Activated T-helper 1 cell treated with anti-CD3 and anti-CD28 coated beads, Interleukin-12 subunit alpha, Interleukin-12 subunit beta, Interleukin-2, Interleukin-4 antibody, amounts not matched to agents 30 ng/mL and 10 ng/mL and 1 ng/mL, durations not matched to agents 14 hours and 24 hours and 36 hours (primary cell): ENCODE measurements at regions of chr16 and their contacts with region 1.

Region 1: GRCh38 chr16:69396187-69397061 is 10.6 kb upstream of the TERF2 start:
- DNase-seq: peak; percentile 60
- H3K4me3 Mint-ChIP-seq: no peak overlapping the region
- H3K27ac Mint-ChIP-seq: peak overlapping the region; percentile 18
- H3K4me1 Mint-ChIP-seq: peaks cover 17% of the 10 kb centered on the region
- H3K27me3 Mint-ChIP-seq: peaks cover 5% of the 10 kb centered on the region

Region 2: GRCh38 chr16:69378760-69379159 is 17.7 kb before region 1 on chr16:
- intact Hi-C with region 1: no loop called
- DNase-seq: no peak
- H3K4me3 Mint-ChIP-seq: no peak overlapping the region
- H3K27ac Mint-ChIP-seq: no peak overlapping the region
- H3K4me1 Mint-ChIP-seq: peaks cover 24% of the 10 kb centered on the region
- H3K27me3 Mint-ChIP-seq: no peaks in the 10 kb centered on the region

Region 3: DNA sequence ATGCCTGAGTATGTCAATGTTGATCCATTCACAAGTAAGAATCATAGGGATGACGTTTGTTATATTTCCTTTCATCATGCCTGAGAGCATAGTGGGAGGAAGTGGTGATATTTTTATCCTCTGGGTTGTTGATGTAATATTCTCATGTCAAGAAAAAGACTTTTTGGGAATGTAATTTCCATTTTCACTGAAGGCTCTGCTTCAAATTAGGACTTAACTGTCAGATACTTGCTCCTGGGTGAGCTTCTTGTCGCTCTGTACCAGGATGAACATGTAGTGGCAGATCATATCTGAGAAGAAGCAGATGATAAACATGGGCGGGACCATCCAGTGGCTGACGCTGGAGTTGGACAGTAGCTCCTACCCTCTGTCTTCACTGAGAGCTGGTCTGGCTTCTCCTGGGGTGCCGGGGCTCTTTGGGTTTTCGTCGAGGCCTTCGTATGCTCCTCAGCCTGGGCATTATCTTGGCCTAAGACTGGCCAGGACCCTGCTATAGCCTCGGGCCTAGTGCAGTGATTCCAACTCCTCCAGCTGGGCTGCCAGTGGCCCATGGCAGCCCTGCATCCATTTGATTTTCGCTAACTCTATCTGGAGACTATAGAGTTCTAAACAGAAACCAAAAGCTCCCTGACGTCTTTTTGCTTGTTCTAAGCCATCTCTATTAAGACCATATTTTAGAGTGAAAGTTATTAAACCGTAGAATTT is 47.7 kb after region 1 on chr16:
- intact Hi-C with region 1: loop called (anchors 5 kb)
- DNase-seq: no peak
- H3K4me3 Mint-ChIP-seq: peak overlapping the region; percentile 74
- H3K27ac Mint-ChIP-seq: peak overlapping the region; percentile 90
- H3K4me1 Mint-ChIP-seq: peaks cover 54% of the 10 kb centered on the region
- H3K27me3 Mint-ChIP-seq: no peaks in the 10 kb centered on the region

Region 4: DNA sequence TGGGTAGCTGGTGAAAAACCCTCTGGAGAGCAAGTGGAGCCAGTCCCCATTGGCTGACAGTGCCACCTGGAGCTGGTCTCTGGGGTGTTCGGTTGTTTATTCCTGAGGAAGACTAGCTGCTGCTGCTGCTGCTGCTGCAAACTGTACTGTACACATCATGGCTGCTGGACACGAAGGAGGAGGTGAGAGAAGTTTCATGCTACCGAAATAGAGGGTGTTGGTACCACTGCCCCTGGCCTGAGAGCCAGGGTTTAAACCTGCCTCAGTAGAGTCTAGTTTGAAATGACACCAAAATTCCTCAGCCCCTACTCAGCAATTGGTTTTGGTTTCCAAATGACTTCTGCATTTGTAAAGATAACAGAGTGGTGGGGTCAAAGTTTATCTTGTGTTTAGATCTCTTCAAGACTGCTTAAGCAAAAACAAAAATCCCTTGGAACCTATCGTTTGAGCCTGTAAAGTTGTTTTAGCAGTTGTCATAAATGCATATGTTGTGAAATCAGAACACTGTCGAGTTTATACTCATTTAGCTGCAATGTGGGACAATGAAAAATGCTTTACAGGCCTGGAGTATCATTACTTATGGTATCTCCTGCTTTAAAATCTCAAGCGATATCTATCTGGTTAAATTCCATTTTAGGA is 68.8 kb after region 1 on chr16:
- intact Hi-C with region 1: loop called (anchors 1 kb)
- DNase-seq: peak; percentile 18
- H3K4me3 Mint-ChIP-seq: peak overlapping the region; percentile 45
- H3K27ac Mint-ChIP-seq: peak overlapping the region; percentile 75
- H3K4me1 Mint-ChIP-seq: peaks cover 55% of the 10 kb centered on the region
- H3K27me3 Mint-ChIP-seq: no peaks in the 10 kb centered on the region

Region 5: DNA sequence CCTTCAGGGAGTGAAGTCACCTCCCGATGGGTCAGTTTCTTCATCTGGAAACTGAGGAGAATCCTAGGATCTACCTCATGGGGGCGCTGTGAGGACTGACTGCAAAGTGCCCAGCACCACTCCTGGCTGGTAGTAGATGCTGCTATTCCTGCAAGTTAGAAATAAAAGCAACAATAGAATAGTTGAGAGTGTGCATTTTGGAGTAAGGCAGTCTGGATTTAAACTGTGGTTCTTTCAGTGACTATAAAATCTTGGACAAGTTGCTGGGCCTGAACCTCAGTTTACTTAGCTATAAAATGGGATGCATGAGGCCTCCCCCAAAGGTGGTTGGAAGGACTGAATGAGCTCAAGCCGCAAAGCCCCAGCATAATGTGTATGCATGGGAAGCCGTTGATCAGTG is 98.6 kb after region 1 on chr16:
- intact Hi-C with region 1: no loop called
- DNase-seq: peak; percentile 10
- H3K4me3 Mint-ChIP-seq: no peak overlapping the region
- H3K27ac Mint-ChIP-seq: no peak overlapping the region
- H3K4me1 Mint-ChIP-seq: peaks cover 8% of the 10 kb centered on the region
- H3K27me3 Mint-ChIP-seq: peaks cover 2% of the 10 kb centered on the region

Region 6: DNA sequence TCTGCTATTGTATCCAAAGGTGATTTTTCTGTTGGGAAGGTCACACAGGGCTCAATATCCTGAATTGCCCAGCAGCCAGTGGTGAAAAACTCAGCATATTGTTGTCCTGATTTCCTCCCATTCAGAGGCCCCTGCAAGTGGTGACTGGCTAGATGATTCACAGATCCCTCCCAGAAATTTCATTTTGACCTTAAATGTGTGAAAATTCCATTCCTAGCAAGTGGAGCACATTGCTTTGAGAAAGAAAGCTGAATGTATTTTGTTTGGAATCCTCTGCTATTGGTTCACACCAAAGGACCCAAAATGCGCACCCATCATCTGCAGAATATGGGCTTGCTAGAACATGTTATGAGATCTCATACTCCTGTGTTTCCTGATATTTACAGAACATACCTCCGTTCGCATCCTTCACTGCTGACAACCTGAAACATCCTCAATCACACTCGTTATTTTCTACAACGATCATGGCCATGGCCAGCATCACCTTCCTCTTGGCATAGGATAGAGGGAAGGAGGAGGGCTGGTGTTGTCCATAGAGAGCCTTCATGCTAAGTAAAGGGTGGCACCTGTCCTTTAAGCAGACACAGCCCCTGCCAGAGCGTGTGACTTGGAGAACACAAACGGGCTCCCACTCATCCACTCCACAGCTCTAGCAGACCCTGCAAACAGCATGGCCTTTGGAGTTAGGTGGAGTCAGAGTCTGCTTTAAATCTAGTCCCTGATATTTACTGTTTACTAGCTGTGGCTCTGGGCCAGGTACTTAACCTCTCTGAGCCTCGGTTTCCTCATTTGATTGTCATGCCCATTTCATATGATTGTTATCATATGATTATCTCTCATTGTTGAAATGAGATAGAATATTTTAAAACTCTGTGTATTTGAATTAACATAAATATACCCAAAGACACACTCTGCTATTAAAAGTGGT is 139.0 kb after region 1 on chr16:
- intact Hi-C with region 1: loop called (anchors 1 kb)
- DNase-seq: no peak
- H3K4me3 Mint-ChIP-seq: no peak overlapping the region
- H3K27ac Mint-ChIP-seq: no peak overlapping the region
- H3K4me1 Mint-ChIP-seq: peaks cover 19% of the 10 kb centered on the region
- H3K27me3 Mint-ChIP-seq: no peaks in the 10 kb centered on the region

Region 7: GRCh38 chr16:69644790-69645189 is 248.4 kb after region 1 on chr16:
- intact Hi-C with region 1: loop called (anchors 10 kb)
- DNase-seq: no peak
- H3K4me3 Mint-ChIP-seq: no peak overlapping the region
- H3K27ac Mint-ChIP-seq: no peak overlapping the region
- H3K4me1 Mint-ChIP-seq: no peaks in the 10 kb centered on the region
- H3K27me3 Mint-ChIP-seq: no peaks in the 10 kb centered on the region

Region 8: GRCh38 chr16:69754469-69755310 is 358.3 kb after region 1 on chr16 and contains the start of gene NOB1:
- intact Hi-C with region 1: loop called (anchors 1 kb)
- DNase-seq: peak; percentile 97
- H3K4me3 Mint-ChIP-seq: peak within 1 kb of the TSS; percentile 99
- H3K27ac Mint-ChIP-seq: peak within 1 kb of the TSS; percentile 98
- H3K4me1 Mint-ChIP-seq: peaks cover 32% of the 10 kb centered on the region
- H3K27me3 Mint-ChIP-seq: peaks cover 2% of the 10 kb centered on the region
- total RNA-seq, gene NOB1: 132 and 133 TPM in 2 replicates